ENCODE measurements at regions of chr3 and their contacts with region 1.

Region 1: DNA sequence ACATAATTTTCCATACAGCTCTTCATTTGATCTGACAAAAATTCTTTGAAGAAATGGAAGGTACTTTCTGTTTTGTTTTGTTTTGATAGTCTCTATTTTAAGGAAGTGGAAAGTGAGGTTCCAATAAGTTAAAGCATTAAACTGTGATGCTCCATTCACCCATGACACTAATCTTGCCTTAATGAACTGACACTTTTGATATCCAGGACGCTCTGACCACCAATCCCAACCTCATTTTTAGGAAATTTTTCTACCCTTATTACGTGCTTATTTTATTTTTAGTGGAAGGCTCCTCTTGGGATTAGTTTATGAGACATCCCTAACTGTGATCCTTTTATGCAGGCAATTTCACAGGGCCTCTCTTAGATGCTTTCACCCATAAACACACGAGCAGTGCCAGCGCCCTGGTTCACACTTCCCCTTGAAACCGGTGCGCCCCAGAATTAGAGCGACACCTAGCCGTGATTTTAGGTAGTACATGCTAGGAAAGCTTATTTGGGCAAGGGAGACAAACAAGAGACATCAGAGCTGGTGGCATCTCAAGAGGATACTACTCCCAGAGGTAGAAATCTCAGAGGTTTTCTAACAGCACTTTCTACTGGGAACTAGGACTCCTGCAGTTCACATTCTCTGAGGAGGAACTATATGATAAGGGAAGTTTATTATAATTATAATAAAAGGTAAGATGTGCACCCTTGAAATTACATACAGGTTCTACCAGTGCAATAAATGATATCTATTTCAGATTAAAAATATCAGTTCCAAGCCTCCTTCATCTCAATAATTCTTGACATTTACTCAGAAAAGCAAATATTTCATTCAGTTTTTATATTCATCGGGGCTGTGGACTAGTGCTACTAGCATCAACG is 173.9 kb downstream of the SLC9A9 start:
- DNase-seq: peak; percentile 74
- H3K4me3 Mint-ChIP-seq: no peak overlapping the region
- H3K27ac Mint-ChIP-seq: no peak overlapping the region
- H3K4me1 Mint-ChIP-seq: peaks cover 5% of the 10 kb centered on the region
- H3K27me3 Mint-ChIP-seq: no peaks in the 10 kb centered on the region

Region 2: GRCh38 chr3:143121241-143122088 is 552.9 kb before region 1 on chr3:
- CTCF ChIA-PET with region 1: interaction called, 12 read pairs
- POLR2A ChIA-PET with region 1: no interaction called
- DNase-seq: peak; percentile 64
- H3K4me3 Mint-ChIP-seq: peak overlapping the region; percentile 47
- H3K27ac Mint-ChIP-seq: no peak overlapping the region
- H3K4me1 Mint-ChIP-seq: peaks cover 29% of the 10 kb centered on the region
- H3K27me3 Mint-ChIP-seq: peaks cover 48% of the 10 kb centered on the region

Region 3: DNA sequence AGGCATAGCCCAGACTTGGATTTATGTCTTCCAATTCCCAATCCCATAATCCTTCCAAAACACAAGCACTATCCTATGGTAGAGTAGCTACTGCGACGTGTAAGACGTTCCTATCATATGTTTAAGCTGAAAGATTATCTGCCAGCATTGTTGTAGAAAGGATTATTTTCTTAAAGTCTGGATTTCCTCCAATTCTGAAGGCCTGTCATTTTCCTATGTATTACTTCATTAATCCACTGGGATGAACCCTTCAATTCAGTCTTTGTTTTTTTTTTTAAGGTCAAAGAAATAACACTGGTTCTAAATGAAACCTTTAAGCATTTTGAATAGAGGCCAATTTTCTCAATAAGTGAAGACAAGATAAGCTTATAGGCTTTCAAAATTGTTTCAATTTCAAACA is 115.0 kb before region 1 on chr3:
- CTCF ChIA-PET with region 1: no interaction called
- POLR2A ChIA-PET with region 1: no interaction called
- DNase-seq: no peak
- H3K4me3 Mint-ChIP-seq: no peak overlapping the region
- H3K27ac Mint-ChIP-seq: no peak overlapping the region
- H3K4me1 Mint-ChIP-seq: no peaks in the 10 kb centered on the region
- H3K27me3 Mint-ChIP-seq: no peaks in the 10 kb centered on the region

Region 4: DNA sequence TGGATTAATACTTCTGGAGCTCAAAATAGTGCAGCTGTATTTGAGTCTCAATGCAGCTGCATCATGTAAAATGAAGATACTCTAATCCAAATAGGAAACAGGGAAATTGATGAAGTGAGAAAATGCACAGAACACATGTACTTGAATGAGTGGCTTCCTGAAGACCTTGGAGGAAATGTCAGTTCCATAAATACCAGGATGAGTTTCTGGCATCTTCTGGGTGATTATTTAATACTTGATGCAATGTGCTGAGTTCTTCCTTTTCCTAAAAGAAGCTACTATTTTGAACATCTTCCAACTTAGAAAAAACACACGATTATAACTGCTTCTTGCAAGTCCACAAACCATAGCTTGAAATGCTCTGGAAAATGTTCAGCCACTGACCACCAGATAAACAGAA is 11.2 kb after region 1 on chr3:
- CTCF ChIA-PET with region 1: interaction called, 19 read pairs
- POLR2A ChIA-PET with region 1: no interaction called
- DNase-seq: no peak
- H3K4me3 Mint-ChIP-seq: no peak overlapping the region
- H3K27ac Mint-ChIP-seq: no peak overlapping the region
- H3K4me1 Mint-ChIP-seq: no peaks in the 10 kb centered on the region
- H3K27me3 Mint-ChIP-seq: no peaks in the 10 kb centered on the region